HepG2 (cell line): ENCODE measurements at regions of chr2 and their contacts with region 1.

Region 1: GRCh38 chr2:222860740-222861410 is at the start of gene ACSL3:
- DNase-seq: peak; percentile 92
- ATAC-seq: peak; percentile 98
- H3K4me3 ChIP-seq: peak within 1 kb of the TSS; percentile 81 to 99 (median 99)
- H3K27ac ChIP-seq: peak within 1 kb of the TSS; percentile 82
- H3K4me1 ChIP-seq: peaks cover 36% of the 10 kb centered on the region
- H3K27me3 ChIP-seq: no peaks in the 10 kb centered on the region; a peak in 1 of 5 replicates
- CTCF ChIP-seq: peak; percentile 32; the same call in 1 of the 2 replicates
- EP300 ChIP-seq: peak in 1 of 2 experiments; percentile 65
- POLR2A ChIP-seq: peak; percentile 99 to 100
- RAD21 ChIP-seq: peak; percentile 83
- total RNA-seq, gene ACSL3: 168 and 305 TPM in 2 replicates

Region 2: DNA sequence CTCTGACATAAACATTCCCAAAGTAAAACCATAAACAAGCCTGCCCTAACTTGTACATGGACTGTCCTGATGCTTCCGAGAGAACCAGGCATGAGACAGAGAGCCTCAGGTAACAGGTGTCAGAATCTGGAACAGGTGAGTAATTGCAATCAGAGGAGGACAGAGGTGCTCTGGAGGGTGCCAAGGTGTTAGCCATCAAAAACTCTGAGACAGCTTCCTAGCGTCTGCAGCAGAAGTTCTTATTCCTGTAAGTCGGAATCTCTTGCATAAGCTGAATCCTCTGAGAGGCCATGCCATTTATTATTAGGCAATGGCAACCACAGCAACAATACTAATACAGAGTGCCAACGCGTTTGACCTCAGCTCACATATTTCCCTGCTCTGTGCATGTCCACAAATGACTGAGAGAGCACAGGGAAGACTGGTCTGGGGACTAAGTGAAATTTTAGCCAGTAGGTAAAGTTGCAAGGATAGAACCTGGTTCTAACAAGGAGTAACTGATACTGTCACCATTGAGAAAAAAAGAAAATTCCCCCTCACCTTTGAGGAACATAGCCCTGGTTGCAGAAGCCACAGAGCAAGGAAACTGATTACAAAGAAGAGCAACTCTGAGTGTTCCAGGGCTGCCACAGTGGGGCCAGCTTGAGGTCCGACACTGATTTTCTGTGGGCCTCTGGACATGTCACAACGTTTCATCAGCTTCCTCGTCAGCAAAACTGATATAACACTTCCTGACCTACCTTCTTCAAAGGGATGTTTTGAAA is 55.2 kb before region 1 on chr2:
- CTCF ChIA-PET with region 1: no interaction called
- POLR2A ChIA-PET with region 1: interaction called, 24 read pairs
- in situ Hi-C with region 1: no loop called
- intact Hi-C with region 1: loop called (anchors 2 kb)
- DNase-seq: peak; percentile 74
- ATAC-seq: peak; percentile 93
- H3K4me3 ChIP-seq: peak overlapping the region; percentile 29 to 52 (median 34)
- H3K27ac ChIP-seq: peak overlapping the region; percentile 81
- H3K4me1 ChIP-seq: peaks cover 49% of the 10 kb centered on the region
- H3K27me3 ChIP-seq: no peaks in the 10 kb centered on the region
- CTCF ChIP-seq: peak; percentile 21; the same call in 1 of the 2 replicates
- EP300 ChIP-seq: peak in 1 of 2 experiments; percentile 89; a peak in 2 of 4 replicates
- POLR2A ChIP-seq: peak in 1 of 2 experiments; percentile 25; a peak in 1 of 4 replicates
- RAD21 ChIP-seq: no peak

Region 3: DNA sequence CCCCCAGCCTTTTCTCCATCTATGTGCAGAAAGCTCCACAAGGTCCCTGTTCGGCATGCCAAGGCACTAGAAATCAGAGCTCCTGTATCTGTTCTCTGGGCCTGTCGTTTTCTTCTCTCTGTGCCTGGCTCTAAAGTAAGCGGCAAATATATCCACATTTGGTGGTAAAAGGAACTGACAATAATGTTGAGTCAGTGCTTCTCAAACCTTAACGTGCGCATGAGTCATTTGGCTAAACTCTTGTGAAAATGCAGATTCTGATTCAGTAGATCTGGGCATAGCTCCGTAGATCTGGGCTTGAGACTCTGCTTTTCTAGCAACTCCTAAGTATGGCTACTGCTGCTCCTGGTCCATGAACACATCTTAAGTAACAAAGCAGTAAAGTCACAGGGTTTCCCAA is 16.6 kb before region 1 on chr2:
- CTCF ChIA-PET with region 1: no interaction called
- POLR2A ChIA-PET with region 1: interaction called, 27 read pairs
- in situ Hi-C with region 1: no loop called
- intact Hi-C with region 1: loop called (anchors 1 kb)
- DNase-seq: no peak
- ATAC-seq: no peak
- H3K4me3 ChIP-seq: no peak overlapping the region
- H3K27ac ChIP-seq: no peak overlapping the region
- H3K4me1 ChIP-seq: peaks cover 40% of the 10 kb centered on the region
- H3K27me3 ChIP-seq: no peaks in the 10 kb centered on the region
- CTCF ChIP-seq: no peak
- EP300 ChIP-seq: no peak
- POLR2A ChIP-seq: no peak
- RAD21 ChIP-seq: no peak

Region 4: DNA sequence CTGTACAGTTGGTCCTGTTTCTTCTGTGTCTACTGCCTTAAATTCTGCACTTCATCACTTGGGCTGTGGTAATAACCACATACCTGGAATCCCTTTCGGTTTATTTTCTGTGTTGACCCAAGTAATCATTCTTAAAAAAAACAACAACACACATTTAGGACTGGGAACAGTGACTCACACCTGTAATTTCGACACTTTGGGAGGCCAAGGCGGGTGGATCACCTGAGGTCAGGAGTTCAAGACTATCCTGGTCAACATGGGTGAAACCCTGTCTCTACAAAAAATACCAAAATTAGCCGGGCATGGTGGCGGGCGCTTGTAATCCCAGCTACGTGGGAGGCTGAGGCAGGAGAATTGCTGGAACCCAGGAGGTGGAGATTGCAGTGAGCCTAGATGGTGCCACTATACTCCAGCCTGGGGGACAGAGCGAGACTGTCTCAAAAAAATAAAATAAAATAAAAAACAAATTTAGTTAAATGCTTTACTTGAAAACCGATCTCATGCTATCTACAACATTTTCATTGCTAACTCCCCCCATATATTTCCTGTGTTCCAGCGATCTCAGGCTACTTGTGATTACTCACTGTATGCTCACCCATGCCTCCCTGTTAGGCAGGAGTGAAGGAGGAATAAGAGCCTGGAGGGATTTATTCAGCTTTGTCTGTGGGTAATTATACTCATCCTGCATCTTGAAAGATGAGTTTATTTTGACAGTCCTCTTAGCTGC is 18.2 kb after region 1 on chr2:
- CTCF ChIA-PET with region 1: no interaction called
- POLR2A ChIA-PET with region 1: interaction called, 7 read pairs
- in situ Hi-C with region 1: no loop called
- intact Hi-C with region 1: loop called (anchors 2 kb)
- DNase-seq: peak; percentile 42
- ATAC-seq: peak; percentile 50
- H3K4me3 ChIP-seq: no peak overlapping the region
- H3K27ac ChIP-seq: no peak overlapping the region
- H3K4me1 ChIP-seq: peaks cover 89% of the 10 kb centered on the region
- H3K27me3 ChIP-seq: no peaks in the 10 kb centered on the region
- CTCF ChIP-seq: no peak
- EP300 ChIP-seq: peak in 1 of 2 experiments; percentile 51; a peak in 2 of 4 replicates
- POLR2A ChIP-seq: no peak; a peak in 1 of 4 replicates
- RAD21 ChIP-seq: no peak

Region 5: DNA sequence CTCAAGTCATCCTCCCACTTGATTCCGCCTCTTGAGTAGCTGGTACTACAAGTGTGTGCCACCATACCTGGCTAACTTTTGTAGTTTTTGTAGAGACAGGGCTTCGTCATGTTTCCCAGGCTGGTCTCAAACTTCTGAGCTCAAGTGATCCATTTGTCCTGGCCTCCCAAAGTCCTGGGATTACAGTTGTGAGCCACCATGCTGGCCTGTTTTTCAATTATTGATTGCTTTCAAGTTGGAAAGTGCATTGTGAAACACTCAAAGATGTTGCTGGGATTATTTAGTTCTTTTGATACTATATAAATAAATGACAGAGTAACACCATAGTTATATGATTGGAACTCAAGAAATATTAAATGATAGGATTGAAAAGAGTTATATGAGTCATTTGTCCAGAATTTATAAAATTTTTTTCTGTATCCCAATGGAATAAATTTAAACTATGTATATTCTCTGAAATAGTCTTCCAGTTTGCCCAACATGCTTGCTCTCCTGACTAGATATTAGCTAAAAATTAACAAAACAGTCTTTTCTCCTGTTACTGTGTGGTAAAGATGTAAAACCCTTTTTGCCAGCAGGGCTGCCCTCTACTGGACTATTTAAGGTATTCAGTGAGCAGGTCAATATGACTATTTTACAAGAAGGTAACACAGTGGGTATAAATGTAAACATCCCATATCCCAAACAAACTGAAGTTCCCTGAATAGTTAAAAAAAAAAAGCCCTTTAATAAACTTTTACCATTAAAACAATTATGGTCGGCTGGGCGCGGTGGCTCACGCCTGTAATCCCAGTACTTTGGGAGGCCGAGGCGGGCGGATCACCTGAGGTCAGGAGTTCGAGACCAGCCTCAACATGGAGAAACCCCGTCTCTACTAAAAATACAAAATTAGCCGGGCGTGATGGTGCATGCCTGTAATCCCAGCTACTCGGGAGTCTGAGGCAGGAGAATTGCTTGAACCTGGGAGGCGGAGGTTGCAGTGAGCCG is 42.7 kb after region 1 on chr2:
- CTCF ChIA-PET with region 1: no interaction called
- POLR2A ChIA-PET with region 1: interaction called, 7 read pairs
- in situ Hi-C with region 1: no loop called
- intact Hi-C with region 1: loop called (anchors 1 kb)
- DNase-seq: peak; percentile 86
- ATAC-seq: peak; percentile 76
- H3K4me3 ChIP-seq: no peak overlapping the region
- H3K27ac ChIP-seq: peak overlapping the region; percentile 48
- H3K4me1 ChIP-seq: peaks cover 100% of the 10 kb centered on the region
- H3K27me3 ChIP-seq: no peaks in the 10 kb centered on the region
- CTCF ChIP-seq: peak; percentile 81
- EP300 ChIP-seq: peak in 1 of 2 experiments; percentile 33; a peak in 1 of 4 replicates
- POLR2A ChIP-seq: no peak
- RAD21 ChIP-seq: peak; percentile 89

Region 6: DNA sequence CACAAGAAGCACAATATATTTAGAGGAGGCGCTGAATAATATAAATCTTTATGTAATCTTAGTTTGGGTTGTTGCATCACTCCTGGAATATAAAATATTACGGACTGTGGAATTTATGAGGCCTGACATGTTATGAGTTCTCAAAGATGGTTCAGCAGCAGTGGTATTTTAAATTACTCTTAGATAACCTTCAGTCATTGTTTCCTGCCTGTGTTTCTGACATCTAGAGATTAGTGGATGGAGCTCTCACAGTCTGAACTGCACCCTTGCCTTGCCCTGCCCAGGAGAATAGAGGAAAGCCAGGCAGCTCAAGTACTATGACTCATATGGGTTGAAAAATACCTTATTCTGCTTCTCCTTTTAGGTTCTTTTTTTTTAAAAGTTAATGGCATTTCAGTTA is 70.0 kb after region 1 on chr2:
- CTCF ChIA-PET with region 1: no interaction called
- POLR2A ChIA-PET with region 1: no interaction called
- in situ Hi-C with region 1: no loop called
- intact Hi-C with region 1: no loop called
- DNase-seq: no peak
- ATAC-seq: peak; percentile 9; the same call in 2 of the 3 replicates
- H3K4me3 ChIP-seq: no peak overlapping the region
- H3K27ac ChIP-seq: no peak overlapping the region
- H3K4me1 ChIP-seq: no peaks in the 10 kb centered on the region
- H3K27me3 ChIP-seq: no peaks in the 10 kb centered on the region
- CTCF ChIP-seq: no peak
- EP300 ChIP-seq: no peak
- POLR2A ChIP-seq: no peak
- RAD21 ChIP-seq: no peak